CD4-positive, alpha-beta T cell (primary cell): ENCODE measurements at regions of chr21 and their contacts with region 1.

Region 1: DNA sequence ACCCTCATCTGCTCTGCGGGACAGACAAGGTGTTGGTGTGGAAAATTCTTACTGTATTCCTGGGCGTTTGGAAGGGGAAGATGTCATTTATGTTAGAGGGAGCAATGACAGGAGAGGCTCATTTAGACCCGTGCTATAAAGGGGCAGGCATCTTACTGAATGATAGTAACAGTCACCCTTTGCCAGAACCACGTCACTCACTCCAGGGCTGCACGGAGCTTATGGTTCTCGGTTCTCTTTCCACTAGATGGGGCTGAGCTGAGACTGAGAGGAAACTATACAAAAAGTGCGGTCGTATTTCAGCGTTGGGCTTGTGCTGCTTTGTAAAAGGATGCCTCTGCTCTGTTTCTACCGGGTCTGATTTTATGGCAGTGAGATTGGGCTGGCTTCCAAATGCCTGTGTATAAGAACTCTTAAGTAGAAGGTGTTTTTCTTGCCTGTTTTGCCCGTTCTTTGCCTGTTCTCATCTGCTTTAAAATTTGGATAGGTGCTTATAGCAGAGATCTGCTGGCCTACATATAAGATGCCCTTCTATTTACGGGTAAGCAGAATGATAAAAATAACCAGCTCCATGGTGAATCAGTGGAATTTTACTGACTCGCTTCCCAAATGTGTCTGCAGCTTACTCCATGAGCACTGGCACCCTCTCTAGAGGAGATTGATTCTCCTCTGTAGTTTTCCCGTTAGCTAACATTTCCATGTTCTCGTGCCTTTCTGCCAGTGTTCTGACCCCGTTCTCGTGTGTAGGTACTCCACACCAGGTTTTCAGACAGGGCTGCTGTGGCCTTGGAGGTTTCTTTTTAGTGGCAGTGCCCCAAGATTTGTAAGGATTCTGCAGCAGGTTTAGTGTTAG is 55.9 kb downstream of the MRPS6 start:
- DNase-seq: peak; percentile 31 to 86 (median 56)
- ATAC-seq: peak; percentile 89
- H3K4me3 ChIP-seq: peak overlapping the region; percentile 9
- H3K4me3 Mint-ChIP-seq: peak overlapping the region; percentile 71
- H3K27ac ChIP-seq: peak overlapping the region; percentile 31 to 54
- H3K27ac Mint-ChIP-seq: peak overlapping the region; percentile 91
- H3K4me1 ChIP-seq: peaks cover 62% of the 10 kb centered on the region
- H3K4me1 Mint-ChIP-seq: peaks cover 94% of the 10 kb centered on the region
- H3K27me3 ChIP-seq: no peaks in the 10 kb centered on the region
- H3K27me3 Mint-ChIP-seq: no peaks in the 10 kb centered on the region
- CTCF ChIP-seq: peak; percentile 40

Region 2: DNA sequence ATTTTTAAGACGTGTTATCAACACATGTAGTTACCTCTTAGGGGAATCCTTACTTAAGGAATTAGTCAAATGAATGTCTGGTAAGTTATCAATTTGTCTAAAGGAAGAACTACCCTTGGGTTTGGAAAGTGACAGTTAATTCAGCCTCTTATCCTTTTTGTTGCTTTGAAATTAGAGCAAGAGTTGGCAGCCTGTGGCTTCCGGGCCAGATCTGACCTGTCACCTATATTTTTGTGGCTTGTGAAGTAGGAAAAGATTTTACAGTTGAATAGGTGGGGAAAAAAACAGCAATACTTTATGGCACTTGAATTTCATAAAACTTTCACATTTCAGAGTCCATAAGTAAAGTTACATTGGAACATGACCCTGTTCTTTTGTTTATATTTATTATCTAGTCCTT is 50.4 kb before region 1 on chr21:
- CTCF ChIA-PET with region 1: interaction called, 3 read pairs
- POLR2A ChIA-PET with region 1: interaction called, 10 read pairs
- intact Hi-C with region 1: loop called (anchors 2 to 5 kb)
- DNase-seq: peak in 5 of 14 experiments; percentile 10 to 61 (median 39)
- ATAC-seq: peak; percentile 30
- H3K4me3 ChIP-seq: no peak overlapping the region
- H3K4me3 Mint-ChIP-seq: peak overlapping the region; percentile 60
- H3K27ac ChIP-seq: no peak overlapping the region
- H3K27ac Mint-ChIP-seq: peak overlapping the region; percentile 48
- H3K4me1 ChIP-seq: peaks cover 43% of the 10 kb centered on the region
- H3K4me1 Mint-ChIP-seq: peaks cover 97% of the 10 kb centered on the region
- H3K27me3 ChIP-seq: no peaks in the 10 kb centered on the region
- H3K27me3 Mint-ChIP-seq: no peaks in the 10 kb centered on the region
- CTCF ChIP-seq: no peak

Region 3: GRCh38 chr21:34091607-34092006 is 37.7 kb before region 1 on chr21:
- CTCF ChIA-PET with region 1: interaction called, 5 read pairs
- POLR2A ChIA-PET with region 1: no interaction called
- intact Hi-C with region 1: loop called in 1 of 2 experiments (anchors 5 kb)
- DNase-seq: peak in 1 of 14 experiments; percentile 22
- ATAC-seq: no peak
- H3K4me3 ChIP-seq: no peak overlapping the region
- H3K4me3 Mint-ChIP-seq: peak overlapping the region; percentile 2
- H3K27ac ChIP-seq: no peak overlapping the region
- H3K27ac Mint-ChIP-seq: peak overlapping the region; percentile 33
- H3K4me1 ChIP-seq: peaks cover 14% of the 10 kb centered on the region
- H3K4me1 Mint-ChIP-seq: peaks cover 66% of the 10 kb centered on the region
- H3K27me3 ChIP-seq: no peaks in the 10 kb centered on the region
- H3K27me3 Mint-ChIP-seq: no peaks in the 10 kb centered on the region
- CTCF ChIP-seq: peak; percentile 34

Region 4: GRCh38 chr21:34202553-34203372 is 73.5 kb after region 1 on chr21:
- CTCF ChIA-PET with region 1: interaction called, 4 read pairs
- POLR2A ChIA-PET with region 1: interaction called, 6 read pairs
- intact Hi-C with region 1: loop called (anchors 2 kb)
- DNase-seq: peak in 3 of 14 experiments; percentile 7 to 33 (median 32)
- ATAC-seq: peak; percentile 21
- H3K4me3 ChIP-seq: peak overlapping the region; percentile 54
- H3K4me3 Mint-ChIP-seq: peak overlapping the region; percentile 84
- H3K27ac ChIP-seq: no peak overlapping the region
- H3K27ac Mint-ChIP-seq: peak overlapping the region; percentile 48
- H3K4me1 ChIP-seq: peaks cover 49% of the 10 kb centered on the region
- H3K4me1 Mint-ChIP-seq: peaks cover 52% of the 10 kb centered on the region
- H3K27me3 ChIP-seq: no peaks in the 10 kb centered on the region
- H3K27me3 Mint-ChIP-seq: no peaks in the 10 kb centered on the region
- CTCF ChIP-seq: no peak

Region 5: GRCh38 chr21:34345091-34345871 is 216.0 kb after region 1 on chr21:
- CTCF ChIA-PET with region 1: no interaction called
- POLR2A ChIA-PET with region 1: interaction called, 3 read pairs
- intact Hi-C with region 1: loop called (anchors 1 to 5 kb)
- DNase-seq: no peak
- ATAC-seq: no peak
- H3K4me3 ChIP-seq: no peak overlapping the region
- H3K4me3 Mint-ChIP-seq: no peak overlapping the region
- H3K27ac ChIP-seq: no peak overlapping the region
- H3K27ac Mint-ChIP-seq: no peak overlapping the region
- H3K4me1 ChIP-seq: peaks cover 4% of the 10 kb centered on the region
- H3K4me1 Mint-ChIP-seq: peaks cover 4% of the 10 kb centered on the region
- H3K27me3 ChIP-seq: peaks cover 0 to 2% of the 10 kb centered on the region in 2 experiments
- H3K27me3 Mint-ChIP-seq: no peaks in the 10 kb centered on the region
- CTCF ChIP-seq: no peak

Region 6: GRCh38 chr21:34351786-34352241 is 222.5 kb after region 1 on chr21:
- CTCF ChIA-PET with region 1: no interaction called
- POLR2A ChIA-PET with region 1: interaction called, 3 read pairs
- intact Hi-C with region 1: loop called (anchors 1 to 5 kb)
- DNase-seq: peak in 7 of 14 experiments; percentile 2 to 49 (median 9)
- ATAC-seq: peak; percentile 53
- H3K4me3 ChIP-seq: no peak overlapping the region
- H3K4me3 Mint-ChIP-seq: no peak overlapping the region
- H3K27ac ChIP-seq: no peak overlapping the region
- H3K27ac Mint-ChIP-seq: no peak overlapping the region
- H3K4me1 ChIP-seq: peaks cover 4% of the 10 kb centered on the region
- H3K4me1 Mint-ChIP-seq: peaks cover 10% of the 10 kb centered on the region
- H3K27me3 ChIP-seq: peaks cover 0 to 2% of the 10 kb centered on the region in 2 experiments
- H3K27me3 Mint-ChIP-seq: peaks cover 7% of the 10 kb centered on the region
- CTCF ChIP-seq: no peak